Activated naive CD4-positive, alpha-beta T cell treated with anti-CD3 and anti-CD28 coated beads for 36 hours (primary cell): ENCODE measurements at regions of chr7 and their contacts with region 1.

Region 1: GRCh38 chr7:99990460-99990852 is 14.6 kb upstream of the AZGP1 start:
- DNase-seq: no peak
- H3K4me3 Mint-ChIP-seq: no peak overlapping the region
- H3K27ac Mint-ChIP-seq: no peak overlapping the region
- H3K4me1 Mint-ChIP-seq: peaks cover 3% of the 10 kb centered on the region
- H3K27me3 Mint-ChIP-seq: no peaks in the 10 kb centered on the region

Region 2: DNA sequence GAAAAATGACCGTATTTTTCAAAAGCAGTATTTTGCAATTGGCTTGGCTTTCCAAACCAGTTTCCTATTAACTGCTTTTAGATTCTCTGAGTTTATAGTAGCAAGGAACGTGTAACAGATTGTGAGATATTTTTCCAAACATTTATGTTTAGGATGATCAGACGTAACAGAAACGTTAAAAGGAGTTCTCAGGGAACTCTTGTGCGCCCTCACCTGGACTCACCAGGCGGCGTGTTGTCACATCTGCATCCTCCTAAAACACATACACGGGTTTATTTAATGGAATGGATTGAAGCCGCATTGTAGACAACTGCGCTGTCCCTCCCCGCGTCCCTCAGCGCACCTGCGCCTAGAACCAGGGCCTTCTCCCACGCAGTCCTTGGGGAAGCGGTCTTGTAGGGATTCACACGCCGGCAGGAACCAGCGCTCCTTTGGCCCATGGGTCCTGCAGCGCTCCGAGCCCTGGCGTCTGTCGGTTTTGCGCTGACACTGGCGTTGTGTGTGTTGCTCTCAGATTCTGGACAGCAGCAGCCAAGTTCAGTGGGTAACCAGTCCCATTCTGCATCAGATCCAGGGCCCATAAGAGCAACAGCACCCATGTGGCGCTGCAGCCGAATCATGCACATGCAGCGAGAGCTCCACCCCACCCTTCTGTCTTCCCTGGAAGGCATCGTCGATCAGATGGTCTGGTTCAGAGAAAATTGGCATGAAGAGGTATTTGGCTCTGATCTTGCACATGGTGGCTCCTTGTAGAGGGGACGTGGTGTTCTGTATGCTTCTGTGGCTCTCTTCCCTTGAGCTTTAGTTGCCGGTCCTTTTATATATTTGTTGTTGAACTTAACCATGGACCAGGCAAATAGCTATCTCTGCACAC is 997.2 kb before region 1 on chr7:
- CTCF ChIA-PET with region 1: no interaction called
- intact Hi-C with region 1: no loop called
- DNase-seq: no peak
- H3K4me3 Mint-ChIP-seq: no peak overlapping the region
- H3K27ac Mint-ChIP-seq: no peak overlapping the region
- H3K4me1 Mint-ChIP-seq: peaks cover 5% of the 10 kb centered on the region
- H3K27me3 Mint-ChIP-seq: no peaks in the 10 kb centered on the region

Region 3: GRCh38 chr7:99631295-99632109 is 359.0 kb before region 1 on chr7:
- CTCF ChIA-PET with region 1: interaction called, 4 read pairs
- intact Hi-C with region 1: loop called (anchors 1 kb)
- DNase-seq: peak; percentile 85
- H3K4me3 Mint-ChIP-seq: no peak overlapping the region
- H3K27ac Mint-ChIP-seq: peak overlapping the region; percentile 97
- H3K4me1 Mint-ChIP-seq: peaks cover 62% of the 10 kb centered on the region
- H3K27me3 Mint-ChIP-seq: no peaks in the 10 kb centered on the region

Region 4: DNA sequence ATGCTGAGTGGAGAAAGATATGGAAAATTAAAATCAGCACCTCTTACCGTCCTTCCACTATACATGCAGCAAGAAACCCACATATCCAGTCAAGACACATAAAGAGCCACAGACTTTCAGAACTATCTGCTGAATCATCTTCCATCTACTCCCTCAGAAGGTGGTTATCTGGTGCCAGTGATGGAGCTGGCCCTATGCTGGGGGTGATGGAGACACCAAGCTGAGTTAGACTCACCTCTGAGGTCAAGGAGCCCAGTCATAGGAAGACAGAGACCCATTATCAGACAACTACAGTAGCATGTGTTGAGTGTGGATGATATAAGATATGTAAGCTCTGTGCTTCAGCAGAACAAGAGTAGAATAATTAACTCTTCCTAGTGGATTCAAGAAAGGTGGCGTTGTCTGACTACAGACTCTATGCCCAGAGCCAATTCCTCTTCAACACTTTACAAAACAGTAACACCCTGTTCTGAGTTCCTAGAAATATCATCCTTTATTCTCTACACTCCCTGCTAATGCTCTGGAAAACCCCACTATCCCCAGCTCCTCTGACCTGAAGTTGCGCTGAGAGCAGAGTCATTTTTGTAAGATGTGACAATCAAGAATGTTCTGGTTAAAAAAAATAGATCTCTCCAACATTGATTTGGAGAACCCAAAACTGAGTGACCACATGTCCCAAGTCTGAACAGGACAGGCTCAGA is 325.0 kb before region 1 on chr7:
- CTCF ChIA-PET with region 1: no interaction called
- intact Hi-C with region 1: no loop called
- DNase-seq: no peak
- H3K4me3 Mint-ChIP-seq: no peak overlapping the region
- H3K27ac Mint-ChIP-seq: no peak overlapping the region
- H3K4me1 Mint-ChIP-seq: peaks cover 4% of the 10 kb centered on the region
- H3K27me3 Mint-ChIP-seq: no peaks in the 10 kb centered on the region

Region 5: GRCh38 chr7:99910976-99911375 is 79.5 kb before region 1 on chr7:
- CTCF ChIA-PET with region 1: interaction called, 155 read pairs
- intact Hi-C with region 1: loop called (anchors 1 kb)
- DNase-seq: no peak
- H3K4me3 Mint-ChIP-seq: no peak overlapping the region
- H3K27ac Mint-ChIP-seq: no peak overlapping the region
- H3K4me1 Mint-ChIP-seq: peaks cover 41% of the 10 kb centered on the region
- H3K27me3 Mint-ChIP-seq: no peaks in the 10 kb centered on the region

Region 6: GRCh38 chr7:99928994-99929729 is 61.3 kb before region 1 on chr7 and contains the start of gene GJC3:
- CTCF ChIA-PET with region 1: interaction called, 7 read pairs
- intact Hi-C with region 1: loop called (anchors 1 kb)
- DNase-seq: peak; percentile 72
- H3K4me3 Mint-ChIP-seq: peak within 1 kb of the TSS; percentile 66
- H3K27ac Mint-ChIP-seq: peak within 1 kb of the TSS; percentile 46
- H3K4me1 Mint-ChIP-seq: peaks cover 23% of the 10 kb centered on the region
- H3K27me3 Mint-ChIP-seq: no peaks in the 10 kb centered on the region
- total RNA-seq, gene GJC3: 0.62 to 1.1 TPM

Region 7: DNA sequence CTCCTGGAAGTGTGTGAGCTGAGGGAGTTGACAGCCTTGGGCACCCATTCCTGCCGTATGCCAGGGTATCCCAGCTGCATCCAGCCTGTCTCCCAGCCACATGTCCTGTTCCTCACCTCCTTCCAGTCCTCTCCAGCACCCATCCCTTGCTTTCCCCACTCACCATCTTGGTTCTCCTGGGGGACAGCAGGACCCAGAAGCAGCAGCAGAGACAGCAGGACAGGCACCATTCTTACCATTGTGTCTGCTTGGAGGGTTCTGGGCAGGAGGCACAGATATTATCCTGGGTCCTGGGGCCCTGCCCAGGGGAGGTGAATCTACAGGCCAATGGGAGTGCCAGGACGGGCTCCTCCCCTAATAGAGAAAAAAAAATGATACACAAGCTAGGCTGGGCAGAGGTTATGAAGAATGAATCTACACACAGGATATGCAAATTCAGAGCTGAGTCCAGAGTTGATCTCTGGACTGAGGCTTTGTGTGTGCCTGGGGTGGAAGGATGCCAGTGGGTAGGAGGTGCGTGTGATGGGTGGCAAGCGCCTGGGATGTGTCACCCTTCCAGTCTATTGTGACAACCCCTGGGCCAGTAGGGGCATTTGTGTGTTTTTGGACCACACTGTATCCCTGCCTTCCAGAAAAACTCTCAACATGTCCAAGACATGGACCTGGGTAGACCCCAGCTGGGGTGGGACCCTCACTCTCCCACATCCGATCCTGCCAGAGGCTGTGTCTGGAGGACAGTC is 14.5 kb before region 1 on chr7 and contains the start of gene AZGP1:
- CTCF ChIA-PET with region 1: interaction called, 27 read pairs
- intact Hi-C with region 1: no loop called
- DNase-seq: no peak
- H3K4me3 Mint-ChIP-seq: no peak within 1 kb of the TSS
- H3K27ac Mint-ChIP-seq: no peak within 1 kb of the TSS
- H3K4me1 Mint-ChIP-seq: no peaks in the 10 kb centered on the region
- H3K27me3 Mint-ChIP-seq: peaks cover 2% of the 10 kb centered on the region
- total RNA-seq, gene AZGP1: not detected

Region 8: DNA sequence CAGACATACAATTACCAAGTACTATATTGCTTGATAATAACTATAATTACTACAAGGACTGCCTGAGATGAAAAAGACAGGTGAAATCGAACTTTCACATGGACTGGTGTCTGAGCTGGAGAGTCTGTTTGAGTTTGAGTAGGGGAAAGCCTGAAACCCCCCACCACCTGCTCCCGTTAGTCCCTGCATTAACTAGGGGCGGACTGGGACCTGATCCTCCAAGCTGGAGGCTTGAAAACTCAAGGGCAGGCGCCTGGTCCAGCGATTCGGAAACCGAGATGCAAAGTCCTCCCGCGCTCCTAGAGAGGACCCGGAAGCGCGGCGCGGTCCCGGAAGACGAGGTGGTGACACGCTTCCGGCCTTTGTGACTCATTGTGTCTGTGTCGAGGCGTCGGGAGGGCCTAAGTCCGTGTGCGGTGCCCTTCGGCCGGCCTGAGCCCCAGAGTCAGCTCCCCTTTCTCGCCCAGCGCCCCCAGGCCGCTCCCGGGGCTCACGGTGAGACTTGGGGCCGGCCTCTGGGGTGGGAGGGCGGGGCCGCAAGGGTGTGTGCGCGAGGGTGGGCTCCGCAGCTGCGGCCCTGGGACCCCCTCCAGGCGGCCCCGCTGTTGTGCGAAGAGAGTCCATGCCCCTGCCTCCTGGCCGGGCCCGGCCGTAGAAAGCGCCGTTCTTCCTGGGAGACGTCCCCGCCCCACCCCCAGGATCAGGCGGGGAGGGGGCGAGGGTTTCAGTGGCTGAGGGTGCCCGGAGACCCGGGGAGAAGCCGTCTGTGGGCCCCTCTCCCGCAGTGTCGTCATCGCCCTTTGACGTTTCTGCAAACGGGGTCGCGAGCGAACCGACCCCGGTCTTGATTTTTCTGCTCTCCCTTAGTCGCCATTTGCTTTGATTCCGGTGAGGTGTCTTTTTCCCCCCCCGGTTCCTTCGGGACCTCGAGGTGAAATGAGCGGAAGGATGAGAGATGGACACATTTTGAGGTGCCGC is 25.1 kb after region 1 on chr7 and contains the start of gene ZKSCAN1:
- CTCF ChIA-PET with region 1: interaction called, 11 read pairs
- intact Hi-C with region 1: no loop called
- DNase-seq: peak; percentile 89
- H3K4me3 Mint-ChIP-seq: peak within 1 kb of the TSS; percentile 88
- H3K27ac Mint-ChIP-seq: peak within 1 kb of the TSS; percentile 91
- H3K4me1 Mint-ChIP-seq: peaks cover 64% of the 10 kb centered on the region
- H3K27me3 Mint-ChIP-seq: no peaks in the 10 kb centered on the region
- total RNA-seq, gene ZKSCAN1: 64.4 to 67.9 TPM

Region 9: GRCh38 chr7:100049441-100050311 is 59.2 kb after region 1 on chr7 and contains the start of gene ZSCAN21:
- CTCF ChIA-PET with region 1: interaction called, 19 read pairs
- intact Hi-C with region 1: loop called (anchors 1 kb)
- DNase-seq: peak; percentile 85
- H3K4me3 Mint-ChIP-seq: peak within 1 kb of the TSS; percentile 85
- H3K27ac Mint-ChIP-seq: peak within 1 kb of the TSS; percentile 91
- H3K4me1 Mint-ChIP-seq: peaks cover 17% of the 10 kb centered on the region
- H3K27me3 Mint-ChIP-seq: no peaks in the 10 kb centered on the region
- total RNA-seq, gene ZSCAN21: 6.2 to 6.4 TPM

Region 10: DNA sequence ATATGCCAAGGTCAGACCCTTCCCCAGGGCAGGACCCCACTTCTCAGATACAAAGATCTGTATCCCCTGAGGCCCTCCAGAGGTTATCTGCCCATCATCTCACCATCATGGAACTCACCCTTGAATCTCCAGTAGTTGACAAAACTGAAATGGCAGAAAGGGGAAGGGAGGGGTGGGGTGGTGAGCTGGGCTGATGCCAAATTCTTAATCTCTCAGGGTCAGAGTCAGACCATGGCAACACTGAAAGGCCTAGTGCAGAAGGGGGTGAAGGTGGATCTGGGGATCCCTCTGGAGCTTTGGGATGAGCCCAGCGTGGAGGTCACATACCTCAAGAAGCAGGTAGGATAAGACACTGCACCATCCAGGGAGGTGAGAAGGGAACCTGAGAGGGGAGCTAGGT is 132.1 kb after region 1 on chr7:
- CTCF ChIA-PET with region 1: no interaction called
- intact Hi-C with region 1: no loop called
- DNase-seq: no peak
- H3K4me3 Mint-ChIP-seq: no peak overlapping the region
- H3K27ac Mint-ChIP-seq: no peak overlapping the region
- H3K4me1 Mint-ChIP-seq: peaks cover 32% of the 10 kb centered on the region
- H3K27me3 Mint-ChIP-seq: no peaks in the 10 kb centered on the region